ENCODE measurements at regions of chr2 and their contacts with region 1.

Region 1: DNA sequence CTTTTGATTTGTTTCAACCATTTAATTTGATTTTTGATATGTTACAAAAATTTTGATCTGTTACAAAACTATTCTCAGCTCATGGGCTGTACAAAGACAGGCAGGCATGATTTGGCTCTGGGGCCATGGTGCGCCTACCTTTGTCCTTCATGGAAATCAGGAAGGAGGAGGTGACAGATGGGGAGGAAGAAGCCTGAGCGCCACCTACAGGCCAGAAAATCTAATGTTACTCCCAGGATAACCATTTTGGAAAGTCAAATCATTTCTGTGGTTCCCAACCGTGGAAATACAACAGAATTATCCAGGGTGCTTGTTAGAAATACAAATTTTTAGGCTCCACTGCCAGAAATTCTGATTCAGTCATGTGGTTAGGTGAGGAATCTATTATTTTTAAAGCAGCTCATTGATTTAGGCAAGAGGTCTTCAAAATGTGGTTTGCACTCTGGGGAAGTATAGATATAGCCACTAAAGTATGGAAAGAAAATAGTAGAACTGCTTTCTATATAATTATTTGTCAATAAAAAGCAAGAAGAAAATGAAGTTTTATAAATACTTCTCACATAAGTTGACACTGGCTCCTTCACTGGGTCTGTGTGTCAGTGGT is 93.9 kb downstream of the EVA1A start:
- DNase-seq: peak; percentile 50
- H3K4me3 Mint-ChIP-seq: no peak overlapping the region
- H3K27ac Mint-ChIP-seq: no peak overlapping the region
- H3K4me1 Mint-ChIP-seq: no peaks in the 10 kb centered on the region
- H3K27me3 Mint-ChIP-seq: peaks cover 72% of the 10 kb centered on the region
- CTCF ChIP-seq: peak; percentile 27

Region 2: DNA sequence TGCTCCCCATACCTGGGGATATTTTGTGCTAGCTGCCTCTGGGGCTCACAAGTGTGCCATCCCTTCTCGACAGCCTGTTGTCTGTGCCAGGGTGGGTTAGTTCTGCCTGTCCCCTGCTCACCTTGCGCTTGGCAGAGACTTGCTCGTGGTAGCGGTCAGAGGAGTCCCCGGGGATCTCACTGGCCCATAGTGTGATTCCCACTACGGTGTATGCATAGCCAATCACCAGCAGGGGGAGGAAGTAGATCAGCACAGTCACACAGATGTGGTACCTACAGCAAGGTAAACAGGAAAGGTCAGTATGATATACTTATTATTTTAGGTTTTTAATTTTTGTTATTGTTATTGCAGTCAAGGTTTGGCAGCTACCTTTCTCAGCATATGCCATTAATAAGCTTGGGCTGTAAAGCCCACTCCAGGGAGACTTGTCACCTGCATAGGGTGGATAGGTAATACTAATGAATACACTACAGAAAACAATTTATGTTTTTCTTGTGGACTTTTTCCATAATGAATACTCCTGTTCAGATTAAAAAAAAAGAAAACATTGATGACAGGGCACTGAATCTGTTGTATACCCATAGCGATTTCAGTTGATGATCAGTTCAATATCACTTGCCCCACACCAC is 413.2 kb before region 1 on chr2:
- CTCF ChIA-PET with region 1: no interaction called
- intact Hi-C with region 1: loop called (anchors 1 kb)
- DNase-seq: peak; percentile 57
- H3K4me3 Mint-ChIP-seq: no peak overlapping the region
- H3K27ac Mint-ChIP-seq: no peak overlapping the region
- H3K4me1 Mint-ChIP-seq: no peaks in the 10 kb centered on the region
- H3K27me3 Mint-ChIP-seq: peaks cover 18% of the 10 kb centered on the region
- CTCF ChIP-seq: peak; percentile 71

Region 3: DNA sequence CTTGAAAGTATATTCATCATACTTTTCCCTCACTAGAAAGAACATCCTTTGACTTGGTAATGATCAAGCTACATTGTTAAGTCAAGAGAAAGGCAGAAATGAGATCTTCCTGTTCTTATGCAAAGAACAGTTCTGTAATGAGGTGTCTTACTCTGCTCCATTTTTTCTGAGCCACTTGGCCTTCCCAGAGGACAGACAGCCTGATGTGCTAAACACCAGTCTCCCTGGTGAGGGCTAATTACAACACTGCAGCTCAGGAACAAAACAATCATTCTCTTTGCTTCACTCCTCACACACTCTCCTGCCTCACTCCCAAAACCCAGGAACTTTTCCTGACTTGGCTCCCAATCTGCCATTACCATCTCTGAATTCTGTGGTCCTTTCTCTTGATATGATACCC is 293.1 kb before region 1 on chr2:
- CTCF ChIA-PET with region 1: no interaction called
- intact Hi-C with region 1: no loop called
- DNase-seq: no peak
- H3K4me3 Mint-ChIP-seq: no peak overlapping the region
- H3K27ac Mint-ChIP-seq: no peak overlapping the region
- H3K4me1 Mint-ChIP-seq: no peaks in the 10 kb centered on the region
- H3K27me3 Mint-ChIP-seq: peaks cover 37% of the 10 kb centered on the region
- CTCF ChIP-seq: no peak

Region 4: DNA sequence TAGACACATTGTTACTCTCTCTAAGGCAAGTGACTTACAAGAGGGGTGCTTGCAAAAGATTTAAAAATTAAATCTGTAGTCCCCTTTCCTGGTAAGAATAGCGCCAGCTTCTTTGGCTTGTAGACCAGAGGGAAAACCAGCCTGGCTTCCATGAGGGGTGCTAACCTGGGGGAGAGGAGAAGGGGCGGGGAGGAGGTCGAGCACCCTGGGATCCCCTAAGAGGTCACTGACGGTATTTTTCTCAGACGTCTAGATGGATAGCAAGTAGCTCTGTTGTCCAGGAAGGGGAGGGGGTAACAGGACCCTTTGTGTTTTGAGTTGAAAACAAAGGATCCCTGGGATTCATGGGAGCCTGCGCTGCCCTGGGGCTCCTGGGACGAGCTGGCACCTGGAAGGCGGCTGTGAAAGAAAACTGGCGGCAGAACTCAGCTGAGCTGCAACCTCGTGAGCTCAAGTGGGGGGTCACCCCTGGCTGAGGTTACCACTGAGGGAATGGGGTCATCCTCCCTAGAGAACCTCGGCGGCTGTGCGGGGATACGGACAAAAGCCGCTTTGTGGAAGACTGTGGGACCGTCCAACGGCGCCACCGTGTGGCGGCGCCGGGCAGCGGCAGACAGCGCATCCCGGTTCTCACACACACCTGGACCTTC is 142.0 kb after region 1 on chr2:
- CTCF ChIA-PET with region 1: no interaction called
- intact Hi-C with region 1: loop called (anchors 1 kb)
- DNase-seq: peak; percentile 69
- H3K4me3 Mint-ChIP-seq: no peak overlapping the region
- H3K27ac Mint-ChIP-seq: no peak overlapping the region
- H3K4me1 Mint-ChIP-seq: no peaks in the 10 kb centered on the region
- H3K27me3 Mint-ChIP-seq: peaks cover 83% of the 10 kb centered on the region
- CTCF ChIP-seq: peak; percentile 91

Region 5: DNA sequence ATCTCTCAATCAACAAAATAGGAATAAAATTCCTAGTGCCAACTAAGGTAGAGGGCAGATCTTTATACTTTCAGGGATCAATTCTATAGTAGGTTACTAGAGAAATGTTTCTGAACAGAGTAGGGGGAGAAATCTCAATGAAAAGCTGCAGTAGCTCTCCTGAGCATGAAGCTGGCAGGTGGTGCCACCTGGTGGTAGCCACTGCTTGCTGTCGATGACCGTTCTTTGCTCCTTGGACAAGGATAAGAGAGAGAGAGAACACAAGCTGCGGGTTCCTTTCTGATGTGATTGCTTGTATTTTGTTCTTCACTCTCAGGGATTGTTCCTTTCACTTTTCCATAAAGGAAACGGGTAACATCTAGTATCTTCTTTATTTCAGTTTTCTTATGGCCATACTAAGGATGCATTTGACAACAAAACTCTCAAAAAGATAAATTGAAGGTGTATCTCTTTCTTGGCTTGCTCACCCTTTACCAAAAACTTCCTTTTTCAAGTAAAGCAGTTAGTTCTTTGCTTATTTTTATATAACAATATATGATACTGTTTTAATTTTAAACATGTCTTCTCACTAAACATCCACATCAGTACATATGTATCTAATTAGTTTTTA is 161.2 kb after region 1 on chr2:
- CTCF ChIA-PET with region 1: interaction called, 3 read pairs
- intact Hi-C with region 1: loop called (anchors 1 kb)
- DNase-seq: peak; percentile 82
- H3K4me3 Mint-ChIP-seq: no peak overlapping the region
- H3K27ac Mint-ChIP-seq: no peak overlapping the region
- H3K4me1 Mint-ChIP-seq: no peaks in the 10 kb centered on the region
- H3K27me3 Mint-ChIP-seq: peaks cover 18% of the 10 kb centered on the region
- CTCF ChIP-seq: peak; percentile 82

Region 6: GRCh38 chr2:75680402-75680801 is 213.6 kb after region 1 on chr2:
- CTCF ChIA-PET with region 1: no interaction called
- intact Hi-C with region 1: no loop called
- DNase-seq: no peak
- H3K4me3 Mint-ChIP-seq: no peak overlapping the region
- H3K27ac Mint-ChIP-seq: no peak overlapping the region
- H3K4me1 Mint-ChIP-seq: peaks cover 10% of the 10 kb centered on the region
- H3K27me3 Mint-ChIP-seq: no peaks in the 10 kb centered on the region
- CTCF ChIP-seq: no peak

Measured in Calu3 (cell line).